ENCODE measurements at regions of chr12 and their contacts with region 1.

Region 1: DNA sequence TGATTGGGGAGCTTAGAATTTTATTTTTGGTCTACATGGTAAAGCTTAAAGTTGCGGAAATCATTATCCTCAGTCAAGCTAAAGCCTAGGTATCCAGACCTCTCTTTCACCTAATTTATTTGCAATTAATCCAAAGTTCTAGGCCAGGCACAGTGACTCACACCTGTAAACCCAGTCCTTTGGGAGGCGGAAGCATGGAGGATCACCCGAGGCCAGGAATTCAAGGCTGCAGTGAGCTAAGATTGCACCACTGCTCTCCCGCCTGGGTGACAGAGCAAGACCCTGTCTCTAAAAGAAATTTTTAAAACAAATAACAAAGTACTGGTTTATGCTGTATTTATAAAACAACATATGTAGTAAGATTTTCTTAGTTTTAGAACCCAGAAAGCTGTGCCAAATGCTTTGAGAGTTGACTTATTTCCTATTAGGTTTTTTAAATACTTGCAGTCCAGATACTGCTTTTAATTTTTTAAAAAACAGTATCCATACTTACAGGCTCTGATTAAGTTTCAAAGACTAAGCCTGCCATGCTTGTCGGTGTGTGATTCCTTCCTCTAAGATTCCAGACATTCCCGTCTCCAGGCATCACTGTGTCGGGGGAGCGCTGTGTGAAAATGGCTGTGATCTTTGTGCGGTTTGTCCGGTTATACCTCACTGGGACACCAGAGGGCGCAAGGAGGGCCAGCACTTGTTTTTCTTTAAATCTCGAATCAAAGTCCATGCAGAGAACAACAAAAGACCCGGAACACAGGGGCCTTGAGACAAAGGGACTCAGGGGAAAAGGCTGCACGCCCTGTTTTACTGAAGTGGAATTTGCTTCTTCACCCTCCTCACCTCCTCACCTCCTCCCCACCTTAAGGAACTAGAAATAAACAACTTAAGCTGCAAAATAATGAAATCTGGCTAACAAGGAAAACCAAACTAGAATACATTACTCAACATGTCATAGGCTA is 24.6 kb upstream of the TMPO start:
- DNase-seq: peak; percentile 52 to 91 (median 76)
- ATAC-seq: peak; percentile 83 to 93 (median 89)
- H3K4me3 ChIP-seq: peak overlapping the region in 1 of 2 donors; percentile 5
- H3K4me3 Mint-ChIP-seq: peak overlapping the region in 1 of 3 donors; percentile 29
- H3K27ac ChIP-seq: peak overlapping the region; percentile 27
- H3K27ac Mint-ChIP-seq: peak overlapping the region; percentile 93 to 94
- H3K4me1 ChIP-seq: peaks cover 4 to 5% of the 10 kb centered on the region in 2 experiments
- H3K4me1 Mint-ChIP-seq: peaks cover 5 to 10% (median 5%) of the 10 kb centered on the region in 3 donors
- H3K27me3 ChIP-seq: no peaks in the 10 kb centered on the region
- H3K27me3 Mint-ChIP-seq: no peaks in the 10 kb centered on the region

Region 2: DNA sequence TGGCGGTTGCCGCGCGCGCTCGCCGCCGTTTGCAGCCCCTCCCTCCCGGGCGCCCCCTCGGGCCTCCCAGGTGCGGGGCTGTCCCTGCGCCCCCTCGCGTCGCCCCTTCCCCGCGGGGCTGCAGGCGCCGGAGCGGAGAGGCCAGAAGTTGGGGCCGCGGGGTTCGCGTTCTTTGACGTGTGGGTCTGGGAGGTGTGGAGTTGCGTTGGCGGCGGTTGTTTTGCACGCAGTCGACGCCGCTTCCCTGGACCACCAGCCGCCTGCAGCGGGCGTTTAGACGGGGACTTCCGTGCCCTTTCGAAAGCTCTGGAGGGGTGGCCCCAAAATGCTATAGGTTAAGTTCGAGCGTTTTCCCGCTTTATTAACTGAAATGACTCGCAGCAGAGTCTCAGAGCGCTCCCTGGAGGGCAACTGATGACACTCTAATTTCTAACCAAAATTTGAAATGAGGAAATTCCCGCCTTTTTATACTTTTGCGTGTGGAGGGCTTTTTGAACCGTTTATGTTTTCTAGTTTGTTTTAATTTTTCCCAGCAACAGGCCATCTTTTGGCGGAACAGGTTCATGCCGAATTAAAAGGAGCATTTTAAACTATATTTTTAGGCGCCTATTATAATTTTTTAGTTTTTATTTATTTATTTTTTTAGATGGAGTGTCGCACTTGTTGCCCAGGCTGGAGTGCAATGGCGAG is 25.6 kb after region 1 on chr12:
- CTCF ChIA-PET with region 1: interaction called, 36 to 87 read pairs
- POLR2A ChIA-PET with region 1: interaction called in 1 of 2 experiments, 16 read pairs
- DNase-seq: peak; percentile 55 to 93 (median 81)
- ATAC-seq: peak; percentile 51 to 66 (median 56)
- H3K4me3 ChIP-seq: peak overlapping the region; percentile 74 to 99
- H3K4me3 Mint-ChIP-seq: peak overlapping the region; percentile 97 to 99 (median 99)
- H3K27ac ChIP-seq: peak overlapping the region; percentile 53
- H3K27ac Mint-ChIP-seq: peak overlapping the region; percentile 98
- H3K4me1 ChIP-seq: peaks cover 23 to 44% of the 10 kb centered on the region in 2 experiments
- H3K4me1 Mint-ChIP-seq: peaks cover 53 to 60% (median 54%) of the 10 kb centered on the region in 3 donors
- H3K27me3 ChIP-seq: no peaks in the 10 kb centered on the region
- H3K27me3 Mint-ChIP-seq: no peaks in the 10 kb centered on the region

Region 3: DNA sequence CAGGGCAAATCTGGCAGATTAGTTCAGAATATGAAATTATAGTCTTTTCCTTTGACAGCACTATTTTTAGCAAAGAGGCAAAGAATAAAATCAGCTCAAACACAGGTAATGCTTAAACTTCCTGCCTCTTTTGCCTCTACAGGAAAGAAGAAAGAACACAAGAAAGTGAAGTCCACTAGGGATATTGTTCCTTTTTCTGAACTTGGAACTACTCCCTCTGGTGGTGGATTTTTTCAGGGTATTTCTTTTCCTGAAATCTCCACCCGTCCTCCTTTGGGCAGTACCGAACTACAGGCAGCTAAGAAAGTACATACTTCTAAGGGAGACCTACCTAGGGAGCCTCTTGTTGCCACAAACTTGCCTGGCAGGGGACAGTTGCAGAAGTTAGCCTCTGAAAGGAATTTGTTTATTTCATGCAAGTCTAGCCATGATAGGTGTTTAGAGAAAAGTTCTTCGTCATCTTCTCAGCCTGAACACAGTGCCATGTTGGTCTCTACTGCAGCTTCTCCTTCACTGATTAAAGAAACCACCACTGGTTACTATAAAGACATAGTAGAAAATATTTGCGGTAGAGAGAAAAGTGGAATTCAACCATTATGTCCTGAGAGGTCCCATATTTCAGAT is 42.0 kb after region 1 on chr12:
- CTCF ChIA-PET with region 1: interaction called, 8 to 24 read pairs
- POLR2A ChIA-PET with region 1: no interaction called
- DNase-seq: peak in 3 of 35 experiments; percentile 9 to 69 (median 34)
- ATAC-seq: peak in 1 of 4 experiments; percentile 51
- H3K4me3 ChIP-seq: no peak overlapping the region
- H3K4me3 Mint-ChIP-seq: no peak overlapping the region
- H3K27ac ChIP-seq: no peak overlapping the region
- H3K27ac Mint-ChIP-seq: peak overlapping the region in 1 of 2 donors; percentile 23
- H3K4me1 ChIP-seq: no peaks in the 10 kb centered on the region
- H3K4me1 Mint-ChIP-seq: peaks cover 6 to 28% (median 20%) of the 10 kb centered on the region in 3 donors
- H3K27me3 ChIP-seq: no peaks in the 10 kb centered on the region
- H3K27me3 Mint-ChIP-seq: no peaks in the 10 kb centered on the region

Region 4: DNA sequence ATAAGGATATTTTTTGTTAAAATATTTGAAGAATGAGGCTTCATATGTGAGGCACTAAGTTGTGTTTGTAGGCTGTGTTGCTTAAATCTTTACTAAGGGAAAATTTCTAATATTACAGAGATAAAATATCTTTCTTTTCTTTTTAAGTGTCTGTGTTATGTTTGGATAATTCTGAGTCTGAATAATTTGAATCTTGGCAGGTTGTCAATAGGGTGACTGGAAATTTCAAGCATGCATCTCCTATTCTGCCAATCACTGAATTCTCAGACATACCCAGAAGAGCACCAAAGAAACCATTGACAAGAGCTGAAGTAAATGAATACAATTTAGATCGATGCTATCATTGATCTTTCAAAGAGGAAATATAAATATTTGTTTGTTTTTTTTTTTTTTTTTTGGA is 54.0 kb after region 1 on chr12:
- CTCF ChIA-PET with region 1: interaction called, 4 to 13 read pairs
- POLR2A ChIA-PET with region 1: interaction called in 1 of 2 experiments, 3 read pairs
- DNase-seq: no peak
- ATAC-seq: no peak
- H3K4me3 ChIP-seq: no peak overlapping the region
- H3K4me3 Mint-ChIP-seq: no peak overlapping the region
- H3K27ac ChIP-seq: no peak overlapping the region
- H3K27ac Mint-ChIP-seq: no peak overlapping the region
- H3K4me1 ChIP-seq: no peaks in the 10 kb centered on the region
- H3K4me1 Mint-ChIP-seq: peaks cover 4 to 11% (median 5%) of the 10 kb centered on the region in 3 donors
- H3K27me3 ChIP-seq: no peaks in the 10 kb centered on the region
- H3K27me3 Mint-ChIP-seq: no peaks in the 10 kb centered on the region